Mammary epithelial cell (primary cell): ENCODE measurements at regions of chr5 and their contacts with region 1.

Region 1: DNA sequence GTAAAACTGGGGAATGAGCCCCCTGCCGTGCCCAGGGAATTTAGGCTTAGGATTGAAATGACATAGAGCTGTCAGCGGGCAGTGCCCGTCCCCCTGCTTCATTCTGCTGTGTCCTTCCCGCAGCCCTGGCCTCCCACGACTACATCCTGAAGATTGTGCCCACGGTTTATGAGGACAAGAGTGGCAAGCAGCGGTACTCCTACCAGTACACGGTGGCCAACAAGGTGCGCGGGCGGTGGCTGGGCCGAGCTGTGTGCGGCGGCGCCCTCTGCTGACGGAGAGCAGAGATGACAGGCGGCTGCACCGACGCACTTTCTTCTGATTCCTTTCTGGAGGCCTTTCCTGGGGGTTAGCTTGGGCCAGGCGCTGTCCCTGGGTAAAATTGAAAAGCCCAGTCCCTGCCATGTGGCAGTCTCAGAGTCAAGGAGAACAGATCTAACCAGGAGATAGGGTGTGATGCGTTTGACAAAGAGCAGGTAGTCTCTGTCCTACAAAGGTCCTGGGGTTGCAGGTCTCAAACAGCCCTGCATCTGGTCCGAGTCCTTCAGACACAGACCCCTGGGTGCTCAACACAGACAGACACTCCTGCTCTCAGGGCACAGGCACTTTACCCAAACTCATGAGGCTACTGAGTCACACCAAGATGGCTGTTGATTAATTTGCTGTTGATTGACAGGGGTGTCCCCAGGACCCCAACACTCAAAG is 26.8 kb upstream of the RPL26L1 start:
- DNase-seq: peak; percentile 40
- H3K4me3 ChIP-seq: no peak overlapping the region
- H3K27ac ChIP-seq: no peak overlapping the region
- H3K4me1 ChIP-seq: peaks cover 9% of the 10 kb centered on the region
- H3K27me3 ChIP-seq: no peaks in the 10 kb centered on the region
- CTCF ChIP-seq: peak; percentile 94 to 97

Region 2: GRCh38 chr5:172721301-172722130 is 210.9 kb before region 1 on chr5:
- CTCF ChIA-PET with region 1: no interaction called
- dilution Hi-C with region 1: no loop called
- in situ Hi-C with region 1: loop called (anchors 5 kb)
- intact Hi-C with region 1: loop called (anchors 1 kb)
- DNase-seq: no peak
- H3K4me3 ChIP-seq: no peak overlapping the region
- H3K27ac ChIP-seq: no peak overlapping the region
- H3K4me1 ChIP-seq: no peaks in the 10 kb centered on the region
- H3K27me3 ChIP-seq: no peaks in the 10 kb centered on the region
- CTCF ChIP-seq: no peak

Region 3: GRCh38 chr5:172733131-172733973 is 199.1 kb before region 1 on chr5:
- CTCF ChIA-PET with region 1: no interaction called
- dilution Hi-C with region 1: no loop called
- in situ Hi-C with region 1: no loop called
- intact Hi-C with region 1: loop called (anchors 1 kb)
- DNase-seq: peak; percentile 100
- H3K4me3 ChIP-seq: no peak overlapping the region
- H3K27ac ChIP-seq: peak overlapping the region; percentile 100
- H3K4me1 ChIP-seq: peaks cover 31% of the 10 kb centered on the region
- H3K27me3 ChIP-seq: no peaks in the 10 kb centered on the region
- CTCF ChIP-seq: no peak

Region 4: GRCh38 chr5:172764849-172765765 is 167.4 kb before region 1 on chr5:
- CTCF ChIA-PET with region 1: interaction called, 4 read pairs
- dilution Hi-C with region 1: no loop called
- in situ Hi-C with region 1: no loop called
- intact Hi-C with region 1: loop called (anchors 1 kb)
- DNase-seq: peak; percentile 99
- H3K4me3 ChIP-seq: peak overlapping the region; percentile 16 to 52 (median 38)
- H3K27ac ChIP-seq: peak overlapping the region; percentile 95
- H3K4me1 ChIP-seq: peaks cover 42% of the 10 kb centered on the region
- H3K27me3 ChIP-seq: no peaks in the 10 kb centered on the region
- CTCF ChIP-seq: no peak

Region 5: DNA sequence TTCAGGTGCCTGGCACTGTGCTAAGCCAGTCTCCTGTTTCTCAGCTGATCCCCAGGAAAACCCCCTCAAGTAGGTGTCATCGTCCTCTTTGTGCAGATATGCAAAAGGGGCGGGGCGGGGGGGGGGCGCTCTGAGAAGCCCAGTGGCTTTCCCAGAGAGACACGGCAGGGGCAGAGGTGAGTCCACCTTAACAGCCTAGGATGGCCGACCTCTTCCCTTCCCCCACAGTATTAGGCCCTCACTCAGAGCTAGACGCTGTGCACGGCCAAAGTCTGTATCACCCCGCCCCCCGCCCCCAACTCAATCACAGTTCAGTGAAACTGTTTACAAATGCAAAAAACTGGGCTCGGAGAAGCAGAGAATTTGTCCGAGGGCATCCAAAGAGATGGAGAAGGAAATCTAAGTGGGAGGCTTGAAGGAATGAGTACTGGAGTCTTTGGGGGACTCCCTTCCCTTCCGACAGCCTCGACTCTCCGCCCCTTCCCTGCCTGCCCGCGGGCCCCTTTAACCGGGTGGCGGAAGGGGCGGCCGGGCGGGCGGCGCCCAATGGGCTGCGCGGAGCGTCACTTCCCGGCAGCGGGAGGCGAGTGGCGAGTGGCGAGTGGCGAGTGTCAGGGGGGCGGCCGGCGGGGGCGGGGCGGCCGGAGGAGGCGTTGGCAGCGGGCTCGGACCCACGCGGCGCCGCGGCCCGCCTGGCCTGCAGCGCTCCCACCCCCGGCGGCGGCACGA is 98.6 kb before region 1 on chr5 and contains the start of gene ERGIC1:
- CTCF ChIA-PET with region 1: no interaction called
- dilution Hi-C with region 1: no loop called
- in situ Hi-C with region 1: no loop called
- intact Hi-C with region 1: loop called (anchors 1 kb)
- DNase-seq: peak; percentile 78
- H3K4me3 ChIP-seq: peak within 1 kb of the TSS; percentile 73 to 87 (median 82)
- H3K27ac ChIP-seq: peak within 1 kb of the TSS; percentile 72
- H3K4me1 ChIP-seq: peaks cover 8% of the 10 kb centered on the region
- H3K27me3 ChIP-seq: no peaks in the 10 kb centered on the region
- CTCF ChIP-seq: no peak
- total RNA-seq, gene ERGIC1: 58.8 to 98.6 TPM

Region 6: DNA sequence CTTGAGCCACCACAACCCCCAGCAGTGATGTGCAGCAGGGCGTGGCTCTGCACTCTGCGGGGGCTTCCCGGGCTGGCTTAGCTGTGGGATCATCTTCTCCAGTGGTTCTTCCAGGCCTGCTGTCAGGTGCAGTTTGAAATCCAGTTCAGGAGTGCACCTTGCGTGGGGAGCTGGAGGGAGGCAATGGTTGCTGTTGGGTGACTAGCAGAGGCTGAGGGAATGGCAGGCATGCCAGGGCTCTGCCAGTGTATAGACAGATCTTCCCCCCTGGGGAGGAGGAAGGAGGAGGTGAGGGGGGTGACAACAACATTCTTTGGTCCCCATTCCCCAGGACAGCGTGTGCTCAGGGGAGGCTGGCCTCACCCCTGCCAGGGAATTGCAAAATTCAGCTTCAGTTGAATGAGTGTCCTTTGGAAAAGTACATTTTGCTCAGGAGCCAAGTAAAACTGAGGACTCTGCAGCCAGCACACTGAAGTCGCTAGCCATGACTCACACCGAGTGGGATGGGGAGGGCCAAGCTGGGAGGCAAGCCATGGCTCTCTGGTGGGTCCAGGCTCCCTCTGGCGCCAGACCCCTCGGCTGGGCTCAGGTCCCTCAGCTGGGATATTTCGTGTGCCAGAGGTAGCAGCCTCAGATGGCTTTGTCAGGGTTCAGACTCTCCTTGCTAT is 63.4 kb before region 1 on chr5:
- CTCF ChIA-PET with region 1: no interaction called
- dilution Hi-C with region 1: no loop called
- in situ Hi-C with region 1: no loop called
- intact Hi-C with region 1: loop called (anchors 1 kb)
- DNase-seq: peak; percentile 76
- H3K4me3 ChIP-seq: no peak overlapping the region
- H3K27ac ChIP-seq: peak overlapping the region; percentile 86
- H3K4me1 ChIP-seq: peaks cover 58% of the 10 kb centered on the region
- H3K27me3 ChIP-seq: no peaks in the 10 kb centered on the region
- CTCF ChIP-seq: peak in 1 of 2 donors; percentile 35

Region 7: GRCh38 chr5:174317259-174317894 is 1384.9 kb after region 1 on chr5:
- CTCF ChIA-PET with region 1: interaction called, 10 read pairs
- dilution Hi-C with region 1: no loop called
- in situ Hi-C with region 1: no loop called
- intact Hi-C with region 1: no loop called
- DNase-seq: peak; percentile 29
- H3K4me3 ChIP-seq: no peak overlapping the region
- H3K27ac ChIP-seq: no peak overlapping the region
- H3K4me1 ChIP-seq: no peaks in the 10 kb centered on the region
- H3K27me3 ChIP-seq: peaks cover 1% of the 10 kb centered on the region
- CTCF ChIP-seq: peak; percentile 63 to 85